T-cell (primary cell): ENCODE measurements at regions of chr14 and their contacts with region 1.

Region 1: DNA sequence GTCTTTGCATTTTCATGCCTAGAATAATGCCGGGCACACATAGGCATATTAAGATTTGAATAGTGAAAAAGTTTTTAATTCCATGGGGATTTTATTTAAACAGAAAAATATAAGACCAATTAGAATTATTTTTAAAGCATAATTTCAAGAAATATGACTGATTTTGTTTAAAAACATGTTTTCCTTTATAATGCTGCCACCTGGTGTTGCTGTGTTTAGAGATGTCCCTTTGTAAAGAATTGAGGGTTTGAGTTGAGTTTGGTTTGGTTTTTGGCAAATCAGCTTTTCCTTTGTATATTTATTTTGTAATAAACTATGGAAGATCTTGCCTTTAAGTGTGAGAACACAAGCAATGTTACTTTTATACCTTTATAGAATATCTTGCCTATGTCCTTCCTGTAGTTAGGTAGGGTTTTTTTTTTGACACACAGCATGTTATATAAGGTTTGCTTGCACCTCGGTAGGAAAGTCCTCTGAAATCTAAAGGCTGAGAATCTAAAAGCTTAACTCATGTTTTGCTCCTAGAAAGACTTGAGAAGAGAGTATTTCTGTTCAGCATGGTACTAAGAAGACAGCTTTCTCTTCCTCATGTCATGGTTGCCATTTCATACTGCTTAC is 31.4 kb upstream of the SNAPC1 start:
- DNase-seq: peak in 4 of 35 experiments; percentile 4 to 61 (median 12)
- ATAC-seq: no peak
- H3K4me3 ChIP-seq: no peak overlapping the region
- H3K4me3 Mint-ChIP-seq: no peak overlapping the region
- H3K27ac ChIP-seq: no peak overlapping the region
- H3K27ac Mint-ChIP-seq: peak overlapping the region; percentile 68 to 76
- H3K4me1 ChIP-seq: peaks cover 0 to 5% of the 10 kb centered on the region in 2 experiments
- H3K4me1 Mint-ChIP-seq: peaks cover 36 to 39% (median 37%) of the 10 kb centered on the region in 3 donors
- H3K27me3 ChIP-seq: no peaks in the 10 kb centered on the region
- H3K27me3 Mint-ChIP-seq: no peaks in the 10 kb centered on the region

Region 2: GRCh38 chr14:61461808-61462275 is 269.0 kb before region 1 on chr14:
- CTCF ChIA-PET with region 1: interaction called, 5 to 10 read pairs
- POLR2A ChIA-PET with region 1: interaction called in 1 of 2 experiments, 3 read pairs
- DNase-seq: peak in 8 of 35 experiments; percentile 14 to 82 (median 42)
- ATAC-seq: peak; percentile 57 to 71 (median 60)
- H3K4me3 ChIP-seq: no peak overlapping the region
- H3K4me3 Mint-ChIP-seq: peak overlapping the region in 2 of 3 donors; percentile 41 to 52
- H3K27ac ChIP-seq: peak overlapping the region; percentile 47
- H3K27ac Mint-ChIP-seq: peak overlapping the region; percentile 92
- H3K4me1 ChIP-seq: peaks cover 10 to 38% of the 10 kb centered on the region in 2 experiments
- H3K4me1 Mint-ChIP-seq: peaks cover 70 to 84% (median 71%) of the 10 kb centered on the region in 3 donors
- H3K27me3 ChIP-seq: no peaks in the 10 kb centered on the region
- H3K27me3 Mint-ChIP-seq: no peaks in the 10 kb centered on the region

Region 3: GRCh38 chr14:61719344-61720293 is 11.2 kb before region 1 on chr14:
- CTCF ChIA-PET with region 1: interaction called, 4 to 11 read pairs
- POLR2A ChIA-PET with region 1: interaction called, 4 read pairs
- DNase-seq: peak in 3 of 35 experiments; percentile 2 to 57 (median 26)
- ATAC-seq: peak; percentile 70 to 84 (median 75)
- H3K4me3 ChIP-seq: peak overlapping the region in 1 of 2 donors; percentile 15
- H3K4me3 Mint-ChIP-seq: peak overlapping the region; percentile 35 to 54 (median 52)
- H3K27ac ChIP-seq: peak overlapping the region; percentile 37
- H3K27ac Mint-ChIP-seq: peak overlapping the region; percentile 66 to 79
- H3K4me1 ChIP-seq: peaks cover 22 to 47% of the 10 kb centered on the region in 2 experiments
- H3K4me1 Mint-ChIP-seq: peaks cover 75 to 80% (median 78%) of the 10 kb centered on the region in 3 donors
- H3K27me3 ChIP-seq: no peaks in the 10 kb centered on the region
- H3K27me3 Mint-ChIP-seq: no peaks in the 10 kb centered on the region

Region 4: DNA sequence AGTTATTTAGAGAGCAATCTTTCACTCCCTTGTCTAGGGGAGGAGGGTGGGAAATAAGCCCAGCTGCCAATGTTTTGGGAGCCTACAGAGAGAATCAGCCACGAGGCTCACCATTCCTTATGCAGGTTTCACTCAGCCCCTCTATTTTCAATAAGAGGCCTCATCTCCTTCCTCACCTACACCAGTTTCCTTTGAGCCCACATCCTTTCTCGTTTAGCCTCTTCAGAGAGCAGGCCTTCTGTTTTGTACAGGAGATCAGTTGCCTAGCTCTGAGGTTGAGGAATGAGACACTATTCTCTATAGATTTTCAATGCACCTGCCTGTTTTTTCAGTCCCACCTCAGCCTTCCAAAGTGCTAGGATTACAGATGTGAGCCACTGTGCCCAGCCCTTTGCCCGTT is 49.3 kb after region 1 on chr14:
- CTCF ChIA-PET with region 1: no interaction called
- POLR2A ChIA-PET with region 1: no interaction called
- DNase-seq: peak in 9 of 35 experiments; percentile 2 to 40 (median 5)
- ATAC-seq: peak; percentile 87 to 97 (median 94)
- H3K4me3 ChIP-seq: no peak overlapping the region
- H3K4me3 Mint-ChIP-seq: peak overlapping the region in 2 of 3 donors; percentile 28 to 75
- H3K27ac ChIP-seq: peak overlapping the region; percentile 55
- H3K27ac Mint-ChIP-seq: peak overlapping the region; percentile 95 to 97
- H3K4me1 ChIP-seq: peaks cover 10 to 34% of the 10 kb centered on the region in 2 experiments
- H3K4me1 Mint-ChIP-seq: peaks cover 28 to 46% (median 36%) of the 10 kb centered on the region in 3 donors
- H3K27me3 ChIP-seq: no peaks in the 10 kb centered on the region
- H3K27me3 Mint-ChIP-seq: no peaks in the 10 kb centered on the region